ENCODE measurements at regions of chr14 and their contacts with region 1.

Region 1: DNA sequence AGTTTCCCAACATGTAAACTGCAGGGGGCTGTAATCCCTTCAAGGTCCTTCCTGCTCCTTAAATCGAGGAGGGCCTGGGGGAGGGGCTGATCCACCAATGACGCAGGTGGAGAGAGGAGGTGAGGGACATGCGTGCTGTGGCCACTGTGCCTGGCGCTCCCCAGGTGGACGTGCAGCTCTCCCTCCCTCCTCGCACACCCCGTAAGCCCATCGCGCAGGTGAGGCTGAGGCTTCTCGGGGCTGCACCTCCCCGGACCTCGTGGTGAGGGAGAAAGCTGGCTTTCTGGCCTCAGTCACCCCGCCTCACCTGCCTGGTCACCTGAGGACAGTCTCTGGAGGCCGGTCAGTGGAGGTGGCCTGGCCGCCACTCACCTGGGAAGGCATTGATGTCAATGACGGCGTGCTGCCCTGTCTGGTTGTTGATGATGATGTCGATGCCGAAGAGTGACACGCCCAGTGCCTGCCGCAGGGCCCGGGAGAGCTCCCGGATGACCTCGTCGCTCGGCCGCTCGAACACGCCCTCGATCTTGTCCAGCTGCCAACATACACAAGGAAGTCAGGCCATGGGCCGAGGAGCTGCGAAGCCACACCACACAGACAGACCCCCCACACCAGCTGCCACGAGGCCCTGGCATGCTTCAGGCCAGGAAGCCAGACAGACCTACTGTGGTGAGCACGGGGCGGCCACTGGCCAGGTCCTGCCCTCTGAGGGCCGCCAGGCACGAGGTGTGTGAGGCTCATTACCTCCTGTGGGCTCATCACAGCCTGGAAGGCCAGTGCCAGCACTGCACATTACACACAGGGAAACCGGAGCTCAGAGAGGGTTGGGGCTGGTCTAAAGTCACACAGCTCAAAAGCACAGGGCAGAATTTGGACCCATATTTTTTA is 23.3 kb downstream of the CHGA start:
- DNase-seq: peak; percentile 48
- H3K4me3 ChIP-seq: no peak overlapping the region
- H3K27ac ChIP-seq: no peak overlapping the region
- H3K4me1 ChIP-seq: peaks cover 9% of the 10 kb centered on the region
- H3K27me3 ChIP-seq: no peaks in the 10 kb centered on the region
- CTCF ChIP-seq: no peak

Region 2: GRCh38 chr14:92997343-92998061 is 51.3 kb after region 1 on chr14:
- CTCF ChIA-PET with region 1: no interaction called
- dilution Hi-C with region 1: loop called (anchors 5 kb)
- in situ Hi-C with region 1: no loop called
- intact Hi-C with region 1: no loop called
- DNase-seq: no peak
- H3K4me3 ChIP-seq: no peak overlapping the region
- H3K27ac ChIP-seq: no peak overlapping the region
- H3K4me1 ChIP-seq: peaks cover 5% of the 10 kb centered on the region
- H3K27me3 ChIP-seq: no peaks in the 10 kb centered on the region
- CTCF ChIP-seq: no peak

Region 3: DNA sequence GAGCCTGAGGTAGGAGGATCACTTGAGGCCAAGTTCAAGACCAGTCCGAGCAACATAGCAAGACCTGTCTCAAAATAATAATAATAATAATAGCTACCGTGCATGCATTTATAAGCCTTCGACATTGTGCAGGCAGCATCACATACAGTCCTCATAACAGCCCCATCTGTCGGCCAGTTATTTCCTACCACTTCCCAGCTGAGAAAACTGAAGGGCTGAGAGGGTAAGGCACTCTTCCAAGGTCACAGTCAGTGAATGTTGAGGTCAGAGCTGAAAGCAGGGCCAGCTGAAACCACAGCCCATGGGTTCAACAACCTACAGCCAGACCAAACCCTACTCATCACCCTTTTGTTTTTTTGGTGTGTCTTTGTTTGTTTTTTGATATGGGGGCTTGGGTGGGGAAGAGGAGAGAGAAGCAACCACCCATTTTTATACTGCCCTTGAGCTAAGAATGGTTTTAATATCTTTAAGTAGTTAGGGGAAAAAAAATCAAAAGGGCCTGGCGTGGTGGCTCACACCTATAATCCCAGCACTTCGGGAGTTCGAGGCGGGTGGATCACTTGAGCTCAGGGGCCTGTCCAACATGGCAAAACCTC is 186.4 kb after region 1 on chr14:
- CTCF ChIA-PET with region 1: no interaction called
- dilution Hi-C with region 1: loop called (anchors 5 kb)
- in situ Hi-C with region 1: loop called in 1 of 2 experiments (anchors 10 kb)
- intact Hi-C with region 1: no loop called
- DNase-seq: no peak
- H3K4me3 ChIP-seq: no peak overlapping the region
- H3K27ac ChIP-seq: no peak overlapping the region
- H3K4me1 ChIP-seq: peaks cover 6% of the 10 kb centered on the region
- H3K27me3 ChIP-seq: no peaks in the 10 kb centered on the region
- CTCF ChIP-seq: no peak

Region 4: DNA sequence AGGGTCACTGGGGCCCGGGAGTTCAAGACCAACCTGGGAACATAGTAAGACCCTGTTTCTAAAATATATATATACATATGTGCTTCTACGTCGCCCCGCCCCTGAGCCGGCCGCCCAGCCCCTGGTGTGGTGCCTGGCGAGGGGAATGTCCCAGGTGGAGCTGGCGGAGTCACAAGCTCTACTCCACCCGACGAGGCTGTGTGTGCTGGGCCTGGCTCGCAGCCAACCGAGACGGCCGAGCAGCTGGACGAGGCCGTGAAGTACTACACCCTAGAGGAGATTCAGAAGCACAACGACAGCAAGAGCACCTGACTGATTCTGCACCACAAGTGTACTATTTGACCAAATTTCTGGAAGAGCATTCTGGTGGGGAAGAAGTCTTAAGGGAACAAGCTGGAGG is 191.7 kb after region 1 on chr14:
- CTCF ChIA-PET with region 1: no interaction called
- dilution Hi-C with region 1: loop called (anchors 5 kb)
- in situ Hi-C with region 1: loop called in 1 of 2 experiments (anchors 10 kb)
- intact Hi-C with region 1: no loop called
- DNase-seq: peak; percentile 13
- H3K4me3 ChIP-seq: no peak overlapping the region
- H3K27ac ChIP-seq: no peak overlapping the region
- H3K4me1 ChIP-seq: peaks cover 6% of the 10 kb centered on the region
- H3K27me3 ChIP-seq: no peaks in the 10 kb centered on the region
- CTCF ChIP-seq: no peak

Measured in mammary epithelial cell (primary cell).